ENCODE measurements at regions of chr5 and their contacts with region 1.

Region 1: GRCh38 chr5:34464830-34465229 is 191.3 kb upstream of the RAI14 start:
- DNase-seq: no peak
- ATAC-seq: no peak
- H3K4me3 ChIP-seq: no peak overlapping the region
- H3K27ac ChIP-seq: no peak overlapping the region
- H3K4me1 ChIP-seq: no peaks in the 10 kb centered on the region
- H3K27me3 ChIP-seq: no peaks in the 10 kb centered on the region
- CTCF ChIP-seq: no peak
- EP300 ChIP-seq: no peak
- POLR2A ChIP-seq: no peak
- RAD21 ChIP-seq: no peak

Region 2: GRCh38 chr5:33440482-33441240 is 1024.2 kb before region 1 on chr5 and contains the start of gene TARS1:
- CTCF ChIA-PET with region 1: interaction called, 4 read pairs
- POLR2A ChIA-PET with region 1: no interaction called
- RAD21 ChIA-PET with region 1: no interaction called
- SMC1A ChIA-PET with region 1: no interaction called
- in situ Hi-C with region 1: loop called (anchors 25 kb)
- intact Hi-C with region 1: loop called (anchors 5 kb)
- DNase-seq: peak; percentile 100
- ATAC-seq: peak; percentile 94
- H3K4me3 ChIP-seq: peak within 1 kb of the TSS; percentile 96
- H3K27ac ChIP-seq: peak within 1 kb of the TSS; percentile 92
- H3K4me1 ChIP-seq: no peaks in the 10 kb centered on the region
- H3K27me3 ChIP-seq: no peaks in the 10 kb centered on the region
- CTCF ChIP-seq: no peak
- EP300 ChIP-seq: 0 out of 4 replicates have a peak, but pooled peaks of 1 of the 2 experiments have one; percentile 21
- POLR2A ChIP-seq: peak; percentile 95
- RAD21 ChIP-seq: no peak
- polyA plus RNA-seq, gene TARS1: 163 to 244 TPM

Region 3: GRCh38 chr5:33997331-33997983 is 467.4 kb before region 1 on chr5:
- CTCF ChIA-PET with region 1: interaction called, 10 read pairs
- POLR2A ChIA-PET with region 1: no interaction called
- RAD21 ChIA-PET with region 1: interaction called, 6 read pairs
- SMC1A ChIA-PET with region 1: interaction called, 3 read pairs
- in situ Hi-C with region 1: loop called (anchors 5 kb)
- intact Hi-C with region 1: loop called (anchors 2 kb)
- DNase-seq: no peak
- ATAC-seq: peak; percentile 90
- H3K4me3 ChIP-seq: no peak overlapping the region
- H3K27ac ChIP-seq: no peak overlapping the region
- H3K4me1 ChIP-seq: peaks cover 4% of the 10 kb centered on the region; the same call in 1 of the 2 replicates
- H3K27me3 ChIP-seq: no peaks in the 10 kb centered on the region
- CTCF ChIP-seq: peak; percentile 65 to 69 (median 66)
- EP300 ChIP-seq: no peak
- POLR2A ChIP-seq: no peak
- RAD21 ChIP-seq: peak; percentile 75